ENCODE measurements at regions of chr10 and their contacts with region 1.

Region 1: DNA sequence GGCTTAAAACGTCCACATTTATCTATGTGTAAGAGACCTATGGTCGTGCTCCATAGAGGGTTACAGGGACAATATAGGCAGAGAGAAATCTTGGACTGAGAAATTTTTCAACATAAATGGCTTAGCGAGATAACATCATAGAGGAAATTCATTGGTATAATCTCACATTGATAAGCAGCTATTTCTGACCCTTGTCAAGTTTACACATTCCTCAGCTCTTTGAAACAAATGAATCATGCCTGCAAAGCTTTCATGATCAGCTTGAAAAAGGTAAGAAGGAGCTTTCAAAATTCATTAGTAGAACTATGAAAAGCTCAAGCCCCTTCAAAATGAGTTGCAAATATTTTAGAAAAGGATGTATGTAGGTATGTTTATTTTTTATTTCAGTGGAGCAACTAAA is 478.8 kb downstream of the NEBL start:
- DNase-seq: no peak
- H3K4me3 Mint-ChIP-seq: no peak overlapping the region
- H3K27ac Mint-ChIP-seq: no peak overlapping the region
- H3K4me1 Mint-ChIP-seq: no peaks in the 10 kb centered on the region
- H3K27me3 Mint-ChIP-seq: no peaks in the 10 kb centered on the region
- CTCF ChIP-seq: no peak

Region 2: GRCh38 chr10:20128811-20129210 is 289.5 kb before region 1 on chr10:
- CTCF ChIA-PET with region 1: interaction called, 10 read pairs
- intact Hi-C with region 1: no loop called
- DNase-seq: no peak
- H3K4me3 Mint-ChIP-seq: no peak overlapping the region
- H3K27ac Mint-ChIP-seq: no peak overlapping the region
- H3K4me1 Mint-ChIP-seq: no peaks in the 10 kb centered on the region
- H3K27me3 Mint-ChIP-seq: no peaks in the 10 kb centered on the region
- CTCF ChIP-seq: no peak

Region 3: DNA sequence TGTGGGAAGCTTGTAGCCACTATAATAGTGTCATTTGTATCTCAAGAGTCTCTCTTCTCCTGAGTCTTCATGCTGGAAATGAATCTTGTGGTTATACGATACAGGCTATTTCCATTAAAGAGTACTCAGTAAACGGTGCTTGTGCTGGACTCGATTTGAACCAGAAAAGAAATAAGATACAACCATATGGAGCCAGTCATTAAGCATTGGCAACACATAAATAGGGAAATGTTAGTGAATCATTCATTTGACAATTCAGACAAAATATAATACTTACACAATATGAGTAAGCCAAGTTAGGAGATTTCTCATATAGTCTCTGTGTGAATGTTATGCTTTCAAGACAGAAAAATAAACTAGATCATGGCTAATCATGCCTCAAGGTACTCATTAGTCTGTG is 245.2 kb before region 1 on chr10:
- CTCF ChIA-PET with region 1: no interaction called
- intact Hi-C with region 1: no loop called
- DNase-seq: no peak
- H3K4me3 Mint-ChIP-seq: no peak overlapping the region
- H3K27ac Mint-ChIP-seq: no peak overlapping the region
- H3K4me1 Mint-ChIP-seq: no peaks in the 10 kb centered on the region
- H3K27me3 Mint-ChIP-seq: no peaks in the 10 kb centered on the region
- CTCF ChIP-seq: no peak

Region 4: GRCh38 chr10:20327954-20328353 is 90.3 kb before region 1 on chr10:
- CTCF ChIA-PET with region 1: no interaction called
- intact Hi-C with region 1: no loop called
- DNase-seq: no peak
- H3K4me3 Mint-ChIP-seq: no peak overlapping the region
- H3K27ac Mint-ChIP-seq: no peak overlapping the region
- H3K4me1 Mint-ChIP-seq: no peaks in the 10 kb centered on the region
- H3K27me3 Mint-ChIP-seq: no peaks in the 10 kb centered on the region
- CTCF ChIP-seq: no peak

Region 5: DNA sequence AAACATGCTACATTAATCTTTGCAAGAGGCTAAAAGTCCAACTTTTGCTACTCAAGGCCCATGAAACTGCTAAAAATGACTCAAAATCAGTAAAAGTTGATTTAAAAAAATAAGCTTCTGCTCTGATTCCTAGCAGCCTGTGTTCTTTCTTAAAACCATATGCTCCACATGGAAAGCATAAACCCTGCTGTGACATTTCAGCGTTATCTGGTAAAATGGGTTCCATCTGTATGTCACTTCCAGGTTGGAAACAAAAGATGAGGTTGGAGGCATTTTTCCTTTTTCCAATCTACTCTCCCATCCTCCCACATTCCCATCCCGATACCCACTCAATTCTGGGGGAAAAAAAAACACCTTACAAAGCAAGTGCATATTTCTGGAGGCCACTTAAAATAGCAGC is 39.4 kb after region 1 on chr10:
- CTCF ChIA-PET with region 1: no interaction called
- intact Hi-C with region 1: no loop called
- DNase-seq: no peak
- H3K4me3 Mint-ChIP-seq: no peak overlapping the region
- H3K27ac Mint-ChIP-seq: no peak overlapping the region
- H3K4me1 Mint-ChIP-seq: no peaks in the 10 kb centered on the region
- H3K27me3 Mint-ChIP-seq: no peaks in the 10 kb centered on the region
- CTCF ChIP-seq: no peak

Region 6: DNA sequence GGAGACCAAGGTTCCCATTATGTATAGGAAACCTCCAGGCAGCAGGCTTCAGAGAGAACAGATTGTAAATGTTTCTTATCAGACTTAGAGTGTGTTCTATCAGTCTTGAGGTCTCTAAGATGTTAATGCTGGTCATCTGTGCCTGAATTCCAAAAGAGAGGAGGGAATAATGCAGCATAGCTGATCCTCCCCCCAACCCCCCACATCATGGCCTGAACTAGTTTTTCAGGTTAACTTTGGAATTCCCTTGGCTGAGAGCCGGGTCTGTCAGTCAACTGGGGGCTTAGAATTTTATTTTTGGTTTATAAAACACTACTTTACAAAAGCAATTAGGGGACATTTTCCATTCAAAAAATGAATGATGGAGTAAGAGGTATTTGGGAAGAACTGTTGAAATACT is 294.5 kb after region 1 on chr10:
- CTCF ChIA-PET with region 1: no interaction called
- intact Hi-C with region 1: no loop called
- DNase-seq: no peak
- H3K4me3 Mint-ChIP-seq: no peak overlapping the region
- H3K27ac Mint-ChIP-seq: no peak overlapping the region
- H3K4me1 Mint-ChIP-seq: no peaks in the 10 kb centered on the region
- H3K27me3 Mint-ChIP-seq: no peaks in the 10 kb centered on the region
- CTCF ChIP-seq: no peak

Measured in Calu3 (cell line).